ENCODE measurements at regions of chr4 and their contacts with region 1.

Region 1: DNA sequence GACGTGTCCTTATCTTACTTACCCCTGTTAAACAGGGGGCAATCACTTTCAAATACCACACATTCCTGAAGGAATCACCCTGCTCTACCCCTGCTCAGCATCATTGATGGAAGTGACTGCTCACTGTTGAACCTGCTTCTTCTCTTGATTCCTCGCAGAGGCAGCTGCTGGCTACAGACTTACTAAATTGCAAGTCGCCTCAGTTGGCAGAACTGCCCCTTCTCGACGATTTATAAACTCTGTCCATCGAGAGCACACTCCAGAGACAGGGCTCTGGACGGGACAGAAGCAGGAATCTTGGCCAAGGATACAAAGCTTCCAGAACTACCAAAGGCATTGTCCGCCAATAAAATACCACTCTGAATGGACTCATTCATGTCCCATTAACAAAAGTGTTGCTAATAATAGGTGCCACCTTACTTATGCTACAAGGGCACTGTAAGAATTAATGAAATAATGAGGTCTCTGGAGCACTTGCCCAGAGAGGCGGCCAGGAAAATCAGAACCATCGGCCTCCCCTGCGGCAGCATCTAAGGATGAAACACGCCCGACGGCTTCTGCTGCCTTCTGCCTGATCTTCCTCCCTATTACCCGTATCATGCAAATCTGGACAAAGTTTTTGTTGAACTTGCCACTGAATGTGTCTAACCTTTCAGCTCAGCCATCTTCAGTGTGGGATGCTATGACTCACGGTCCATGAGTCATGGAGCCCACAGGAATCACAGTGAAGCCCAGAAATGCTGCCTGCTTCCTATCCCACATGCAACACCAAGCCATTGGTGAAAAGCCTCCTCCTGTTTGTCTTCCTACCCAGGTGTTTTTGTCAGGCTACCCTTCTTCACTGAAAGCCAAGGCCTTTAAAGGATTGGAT is 164.9 kb downstream of the MAML3 start:
- DNase-seq: peak in 1 of 2 donors; percentile 48
- ATAC-seq: peak; percentile 81 to 89 (median 86)
- H3K4me3 ChIP-seq: no peak overlapping the region
- H3K27ac ChIP-seq: peak overlapping the region; percentile 6
- H3K4me1 ChIP-seq: peaks cover 19% of the 10 kb centered on the region
- H3K27me3 ChIP-seq: no peaks in the 10 kb centered on the region
- CTCF ChIP-seq: no peak

Region 2: DNA sequence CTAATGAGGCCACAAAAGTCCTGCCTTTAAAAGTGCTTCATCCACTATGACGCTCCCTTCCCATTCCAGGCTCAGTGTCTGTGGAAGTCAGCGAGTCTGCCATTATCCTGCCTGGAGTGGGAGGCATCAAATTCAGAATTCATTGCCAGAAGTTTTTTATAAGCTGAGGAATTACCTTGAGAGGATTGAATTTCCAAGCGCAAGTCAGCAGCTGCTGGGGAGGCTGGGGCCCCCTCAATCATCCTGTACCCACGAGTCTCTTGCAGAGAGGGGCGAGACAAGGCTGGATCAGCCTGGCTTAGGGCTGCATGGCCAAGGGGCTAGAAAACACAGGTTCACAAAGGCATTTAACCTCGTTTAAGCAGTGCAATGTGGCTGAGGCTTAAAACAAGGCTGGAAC is 1144.0 kb before region 1 on chr4:
- intact Hi-C with region 1: loop called in 1 of 2 experiments (anchors 10 kb)
- DNase-seq: no peak
- ATAC-seq: peak in 3 of 4 donors; percentile 26 to 41 (median 30)
- H3K4me3 ChIP-seq: no peak overlapping the region
- H3K27ac ChIP-seq: no peak overlapping the region
- H3K4me1 ChIP-seq: peaks cover 11% of the 10 kb centered on the region
- H3K27me3 ChIP-seq: no peaks in the 10 kb centered on the region
- CTCF ChIP-seq: no peak

Region 3: DNA sequence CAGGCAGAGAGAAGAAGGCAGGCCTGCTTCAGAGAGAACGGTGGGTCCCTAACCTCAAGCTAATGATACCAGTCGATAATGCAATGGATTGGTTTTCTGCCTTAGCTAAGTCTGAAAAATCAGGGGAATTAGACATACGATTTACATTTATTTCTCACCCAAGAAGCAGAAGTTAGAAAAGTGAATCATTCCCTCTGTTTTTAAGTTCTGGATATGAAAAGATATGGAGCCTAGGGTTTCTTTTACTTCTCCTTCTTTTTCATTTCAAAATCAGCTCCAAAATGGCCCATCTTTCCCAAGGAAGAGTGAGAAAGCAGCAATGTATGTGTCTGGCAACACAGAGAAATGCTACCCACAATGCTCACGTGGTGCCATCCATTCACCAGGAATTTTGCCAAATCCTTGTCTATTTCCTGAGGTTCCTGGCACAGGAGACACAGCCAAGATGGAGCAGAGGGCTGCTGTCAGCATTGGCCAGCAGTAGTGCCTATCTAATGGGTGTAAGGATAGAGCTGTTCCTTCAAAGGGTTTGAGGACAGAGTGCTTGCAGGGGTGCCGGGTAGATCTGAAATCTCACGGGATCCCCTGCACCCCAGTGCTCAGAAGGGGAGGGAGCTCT is 66.6 kb before region 1 on chr4:
- intact Hi-C with region 1: loop called in 1 of 2 experiments (anchors 10 kb)
- DNase-seq: no peak
- ATAC-seq: peak in 3 of 4 donors; percentile 27 to 42 (median 29)
- H3K4me3 ChIP-seq: no peak overlapping the region
- H3K27ac ChIP-seq: peak overlapping the region; percentile 73
- H3K4me1 ChIP-seq: peaks cover 46% of the 10 kb centered on the region
- H3K27me3 ChIP-seq: no peaks in the 10 kb centered on the region
- CTCF ChIP-seq: no peak

Measured in psoas muscle (tissue), 8 donors.